Endothelial cell of umbilical vein (primary cell): ENCODE measurements at regions of chr5 and their contacts with region 1.

Region 1: DNA sequence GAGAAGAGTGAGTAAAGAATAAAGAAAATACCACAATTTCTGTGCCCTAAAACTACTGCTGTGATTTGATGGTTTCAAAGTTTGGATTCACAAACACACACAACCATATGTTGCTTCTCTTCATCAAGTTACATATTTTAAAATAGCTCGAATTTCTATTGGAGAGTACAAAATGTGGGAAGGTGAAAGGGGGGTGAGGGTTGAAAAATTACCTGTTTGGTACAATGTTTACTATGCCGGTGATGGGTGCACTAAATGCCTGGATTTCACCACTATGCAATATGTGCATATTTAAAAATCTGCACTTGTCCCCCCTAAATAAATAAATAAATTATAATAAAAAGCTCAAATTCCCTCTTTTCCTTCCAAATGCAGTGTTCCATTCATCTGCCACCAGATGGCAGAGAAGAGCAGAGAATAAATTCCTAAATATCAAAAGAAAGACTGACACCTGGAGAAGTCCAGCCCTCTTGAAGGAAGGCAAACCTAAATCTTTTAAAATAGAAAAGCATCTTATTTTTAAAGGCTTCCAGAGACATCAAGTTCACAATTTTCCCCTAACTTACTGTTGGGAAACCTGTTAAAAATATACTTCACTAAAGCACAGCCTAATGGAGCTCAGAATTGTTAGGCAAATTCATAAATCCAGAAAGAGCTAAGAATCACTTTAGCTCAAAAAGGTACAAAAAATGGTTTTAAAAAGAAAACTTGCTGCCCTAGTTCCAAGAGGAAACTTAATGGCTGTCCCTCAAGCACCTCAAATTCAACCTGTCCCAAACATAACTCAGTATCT is 24.8 kb upstream of the HNRNPA0 start:
- DNase-seq: peak; percentile 59
- H3K4me3 ChIP-seq: no peak overlapping the region
- H3K27ac ChIP-seq: no peak overlapping the region
- H3K4me1 ChIP-seq: no peaks in the 10 kb centered on the region
- H3K27me3 ChIP-seq: peaks cover 7 to 13% of the 10 kb centered on the region in 2 experiments
- CTCF ChIP-seq: peak; percentile 50 to 51
- POLR2A ChIP-seq: no peak

Region 2: DNA sequence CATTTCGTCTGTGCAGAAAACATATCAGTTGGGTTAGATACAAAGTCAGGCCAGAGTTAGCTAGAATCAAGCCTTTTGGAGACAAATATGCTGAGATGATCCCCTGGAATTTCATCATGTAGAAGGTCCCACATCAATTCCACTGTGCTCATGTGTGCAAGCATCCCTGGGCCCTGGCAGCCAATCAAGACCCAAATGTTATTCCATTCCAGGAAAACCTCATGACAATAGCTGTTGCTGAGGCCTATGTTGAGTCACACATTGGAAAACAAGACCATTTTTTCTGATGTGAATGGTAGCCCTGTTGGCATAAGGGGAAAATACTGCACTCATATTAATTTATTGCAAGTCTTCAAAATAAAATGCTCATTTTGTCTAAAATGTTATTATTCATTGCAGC is 291.4 kb before region 1 on chr5:
- CTCF ChIA-PET with region 1: no interaction called
- POLR2A ChIA-PET with region 1: no interaction called
- dilution Hi-C with region 1: no loop called
- intact Hi-C with region 1: no loop called
- DNase-seq: peak; percentile 87
- H3K4me3 ChIP-seq: no peak overlapping the region
- H3K27ac ChIP-seq: peak overlapping the region; percentile 77
- H3K4me1 ChIP-seq: peaks cover 28% of the 10 kb centered on the region
- H3K27me3 ChIP-seq: no peaks in the 10 kb centered on the region
- CTCF ChIP-seq: no peak
- POLR2A ChIP-seq: no peak

Region 3: DNA sequence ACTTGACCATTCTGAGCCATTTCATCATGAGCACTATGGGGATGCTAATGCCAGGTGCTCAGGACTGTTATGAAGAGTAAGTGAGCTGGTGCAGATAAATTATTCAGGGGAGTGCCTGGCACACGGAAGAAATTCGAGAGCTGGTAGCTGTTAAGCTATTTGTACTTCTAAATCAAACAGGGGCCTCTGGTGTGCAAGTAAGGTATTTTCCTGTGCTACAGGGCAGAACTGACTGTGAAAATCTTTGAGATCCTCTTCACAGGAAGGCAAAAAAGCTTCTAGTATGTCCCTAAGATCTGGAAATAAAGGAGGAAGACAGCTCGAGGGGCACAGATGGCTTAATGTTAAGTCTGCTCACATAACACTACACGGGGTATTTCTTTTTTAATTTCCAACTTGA is 173.6 kb before region 1 on chr5:
- CTCF ChIA-PET with region 1: no interaction called
- POLR2A ChIA-PET with region 1: no interaction called
- dilution Hi-C with region 1: no loop called
- intact Hi-C with region 1: no loop called
- DNase-seq: peak; percentile 29
- H3K4me3 ChIP-seq: no peak overlapping the region
- H3K27ac ChIP-seq: no peak overlapping the region
- H3K4me1 ChIP-seq: no peaks in the 10 kb centered on the region
- H3K27me3 ChIP-seq: peaks cover 33% of the 10 kb centered on the region in 2 experiments
- CTCF ChIP-seq: peak in 1 of 2 donors; percentile 15
- POLR2A ChIP-seq: no peak

Region 4: DNA sequence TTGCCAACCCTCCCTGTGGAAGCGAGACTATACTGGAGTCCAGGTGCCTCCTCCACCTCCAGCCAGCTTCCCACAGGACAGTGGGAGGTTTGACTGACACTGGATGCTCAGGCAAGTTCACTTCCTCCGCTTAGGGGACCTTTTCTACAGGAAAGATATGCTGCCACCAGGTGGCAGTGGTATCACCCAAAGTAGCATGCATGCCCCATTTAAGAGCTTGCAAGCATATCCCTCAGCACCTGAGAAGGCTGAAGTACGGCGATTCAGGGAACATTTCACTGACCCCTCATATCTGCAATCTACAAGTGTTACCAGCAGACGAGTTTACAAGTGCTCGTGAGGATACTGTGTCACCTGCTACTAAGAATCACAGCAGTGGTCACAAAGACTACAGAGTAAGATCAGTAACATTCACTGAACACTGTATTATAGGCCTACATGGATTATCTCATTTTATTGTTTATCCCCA is 118.6 kb before region 1 on chr5:
- CTCF ChIA-PET with region 1: interaction called, 23 read pairs
- POLR2A ChIA-PET with region 1: no interaction called
- dilution Hi-C with region 1: loop called (anchors 25 kb)
- intact Hi-C with region 1: no loop called
- DNase-seq: peak; percentile 90
- H3K4me3 ChIP-seq: no peak overlapping the region
- H3K27ac ChIP-seq: no peak overlapping the region
- H3K4me1 ChIP-seq: peaks cover 4% of the 10 kb centered on the region
- H3K27me3 ChIP-seq: no peaks in the 10 kb centered on the region
- CTCF ChIP-seq: peak; percentile 75 to 78
- POLR2A ChIP-seq: no peak

Region 5: DNA sequence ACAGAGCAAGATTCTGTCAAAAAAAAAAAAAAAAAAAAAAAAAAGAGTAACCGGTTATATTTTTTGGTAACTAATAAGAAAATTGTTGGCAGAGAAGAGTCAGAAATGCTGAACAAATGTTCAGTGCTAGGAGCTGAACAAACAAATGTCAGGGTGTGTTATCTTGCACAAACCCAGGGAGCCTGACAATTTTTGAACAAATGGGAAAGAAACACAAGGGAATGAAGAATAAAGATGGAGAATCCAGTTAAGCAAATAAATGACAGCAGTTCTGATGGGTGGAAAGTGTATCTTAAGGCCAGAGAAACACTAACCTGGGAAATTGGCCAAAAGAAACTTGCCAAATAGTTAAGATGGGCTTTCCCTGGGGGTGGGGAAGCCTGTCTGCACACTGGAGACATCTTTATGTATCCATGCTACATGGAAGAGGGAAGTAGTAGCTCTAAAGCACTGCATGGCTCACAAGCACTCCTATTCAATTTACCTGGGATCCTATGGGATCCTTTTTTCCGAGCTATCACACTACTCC is 66.8 kb before region 1 on chr5:
- CTCF ChIA-PET with region 1: no interaction called
- POLR2A ChIA-PET with region 1: no interaction called
- dilution Hi-C with region 1: no loop called
- intact Hi-C with region 1: no loop called
- DNase-seq: no peak
- H3K4me3 ChIP-seq: no peak overlapping the region
- H3K27ac ChIP-seq: no peak overlapping the region
- H3K4me1 ChIP-seq: peaks cover 3% of the 10 kb centered on the region
- H3K27me3 ChIP-seq: no peaks in the 10 kb centered on the region
- CTCF ChIP-seq: no peak
- POLR2A ChIP-seq: no peak

Region 6: DNA sequence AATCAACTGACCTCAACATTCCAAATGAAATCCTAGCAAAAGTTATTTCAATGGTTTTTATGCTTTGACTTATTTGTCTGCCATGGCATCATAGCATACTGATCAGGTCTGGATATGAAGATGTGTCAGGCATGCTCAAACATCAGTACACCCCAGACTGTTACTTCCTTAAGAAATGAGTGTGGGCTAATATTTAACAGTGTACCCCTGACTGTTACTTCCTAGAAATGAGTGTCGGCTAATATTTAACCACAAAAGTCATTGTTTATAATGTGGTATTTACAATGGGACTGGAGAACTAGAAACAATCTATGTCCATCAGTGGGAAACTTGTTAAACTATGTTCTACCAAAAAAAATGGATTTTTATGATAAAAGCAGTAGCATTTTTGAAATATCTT is 13.3 kb after region 1 on chr5:
- CTCF ChIA-PET with region 1: interaction called, 27 read pairs
- POLR2A ChIA-PET with region 1: no interaction called
- dilution Hi-C with region 1: no loop called
- intact Hi-C with region 1: no loop called
- DNase-seq: no peak
- H3K4me3 ChIP-seq: no peak overlapping the region
- H3K27ac ChIP-seq: no peak overlapping the region
- H3K4me1 ChIP-seq: no peaks in the 10 kb centered on the region
- H3K27me3 ChIP-seq: peaks cover 4 to 5% of the 10 kb centered on the region in 2 experiments
- CTCF ChIP-seq: no peak
- POLR2A ChIP-seq: no peak

Region 7: DNA sequence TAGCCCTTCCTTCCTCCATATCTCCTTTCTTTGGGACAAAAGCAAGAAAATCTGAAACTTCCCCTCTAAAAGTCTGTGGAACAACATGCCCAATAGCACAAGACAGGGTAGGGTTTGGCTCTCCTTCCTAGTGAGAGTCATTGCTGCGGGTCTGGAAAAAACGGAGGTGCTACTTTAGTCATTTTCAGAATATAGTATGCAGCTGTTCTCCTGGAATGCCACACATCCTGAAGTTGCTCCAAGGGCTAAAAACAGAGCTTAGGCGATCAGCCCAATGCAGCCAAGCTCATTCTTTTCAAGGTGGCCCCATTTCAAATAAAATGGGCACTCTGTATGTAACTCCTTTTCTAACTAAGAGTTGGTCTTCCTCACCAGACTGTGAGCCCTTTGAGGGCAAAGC is 49.2 kb after region 1 on chr5:
- CTCF ChIA-PET with region 1: interaction called, 28 read pairs
- POLR2A ChIA-PET with region 1: no interaction called
- dilution Hi-C with region 1: no loop called
- intact Hi-C with region 1: no loop called
- DNase-seq: no peak
- H3K4me3 ChIP-seq: no peak overlapping the region
- H3K27ac ChIP-seq: no peak overlapping the region
- H3K4me1 ChIP-seq: no peaks in the 10 kb centered on the region
- H3K27me3 ChIP-seq: peaks cover 3 to 6% of the 10 kb centered on the region in 2 experiments
- CTCF ChIP-seq: no peak
- POLR2A ChIP-seq: no peak

Region 8: DNA sequence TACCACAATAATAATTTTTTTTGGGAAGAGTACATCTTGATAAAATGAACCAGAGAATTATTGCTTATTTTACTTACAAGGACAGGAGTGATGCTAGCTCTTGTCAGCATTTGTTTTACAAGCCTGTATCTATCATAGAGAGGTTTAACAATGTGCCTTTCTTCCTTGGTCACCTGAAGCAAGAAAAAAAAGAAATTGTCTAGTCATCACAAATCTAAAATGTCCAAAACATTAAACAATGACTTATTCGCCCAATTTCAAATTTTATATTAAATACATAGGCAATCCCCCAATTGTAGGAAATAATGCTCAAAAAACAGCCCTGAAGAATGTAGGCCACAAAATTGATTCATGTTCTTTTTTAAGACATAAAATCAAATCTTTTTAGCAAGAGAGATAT is 166.9 kb after region 1 on chr5:
- CTCF ChIA-PET with region 1: interaction called, 14 read pairs
- POLR2A ChIA-PET with region 1: no interaction called
- dilution Hi-C with region 1: no loop called
- intact Hi-C with region 1: no loop called
- DNase-seq: no peak
- H3K4me3 ChIP-seq: no peak overlapping the region
- H3K27ac ChIP-seq: no peak overlapping the region
- H3K4me1 ChIP-seq: no peaks in the 10 kb centered on the region
- H3K27me3 ChIP-seq: no peaks in the 10 kb centered on the region
- CTCF ChIP-seq: no peak
- POLR2A ChIP-seq: no peak

Region 9: GRCh38 chr5:138035605-138036537 is 256.9 kb after region 1 on chr5:
- CTCF ChIA-PET with region 1: interaction called, 76 read pairs
- POLR2A ChIA-PET with region 1: no interaction called
- dilution Hi-C with region 1: no loop called
- intact Hi-C with region 1: loop called (anchors 1 kb)
- DNase-seq: peak; percentile 87
- H3K4me3 ChIP-seq: no peak overlapping the region
- H3K27ac ChIP-seq: no peak overlapping the region
- H3K4me1 ChIP-seq: peaks cover 10% of the 10 kb centered on the region
- H3K27me3 ChIP-seq: no peaks in the 10 kb centered on the region
- CTCF ChIP-seq: peak; percentile 74 to 84
- POLR2A ChIP-seq: no peak

Region 10: GRCh38 chr5:138128334-138128733 is 349.4 kb after region 1 on chr5:
- CTCF ChIA-PET with region 1: interaction called, 120 read pairs
- POLR2A ChIA-PET with region 1: no interaction called
- dilution Hi-C with region 1: no loop called
- intact Hi-C with region 1: loop called (anchors 1 kb)
- DNase-seq: peak; percentile 70
- H3K4me3 ChIP-seq: no peak overlapping the region
- H3K27ac ChIP-seq: no peak overlapping the region
- H3K4me1 ChIP-seq: peaks cover 8% of the 10 kb centered on the region
- H3K27me3 ChIP-seq: no peaks in the 10 kb centered on the region
- CTCF ChIP-seq: no peak
- POLR2A ChIP-seq: no peak